Calu3 (cell line): ENCODE measurements at regions of chr15 and their contacts with region 1.

Region 1: DNA sequence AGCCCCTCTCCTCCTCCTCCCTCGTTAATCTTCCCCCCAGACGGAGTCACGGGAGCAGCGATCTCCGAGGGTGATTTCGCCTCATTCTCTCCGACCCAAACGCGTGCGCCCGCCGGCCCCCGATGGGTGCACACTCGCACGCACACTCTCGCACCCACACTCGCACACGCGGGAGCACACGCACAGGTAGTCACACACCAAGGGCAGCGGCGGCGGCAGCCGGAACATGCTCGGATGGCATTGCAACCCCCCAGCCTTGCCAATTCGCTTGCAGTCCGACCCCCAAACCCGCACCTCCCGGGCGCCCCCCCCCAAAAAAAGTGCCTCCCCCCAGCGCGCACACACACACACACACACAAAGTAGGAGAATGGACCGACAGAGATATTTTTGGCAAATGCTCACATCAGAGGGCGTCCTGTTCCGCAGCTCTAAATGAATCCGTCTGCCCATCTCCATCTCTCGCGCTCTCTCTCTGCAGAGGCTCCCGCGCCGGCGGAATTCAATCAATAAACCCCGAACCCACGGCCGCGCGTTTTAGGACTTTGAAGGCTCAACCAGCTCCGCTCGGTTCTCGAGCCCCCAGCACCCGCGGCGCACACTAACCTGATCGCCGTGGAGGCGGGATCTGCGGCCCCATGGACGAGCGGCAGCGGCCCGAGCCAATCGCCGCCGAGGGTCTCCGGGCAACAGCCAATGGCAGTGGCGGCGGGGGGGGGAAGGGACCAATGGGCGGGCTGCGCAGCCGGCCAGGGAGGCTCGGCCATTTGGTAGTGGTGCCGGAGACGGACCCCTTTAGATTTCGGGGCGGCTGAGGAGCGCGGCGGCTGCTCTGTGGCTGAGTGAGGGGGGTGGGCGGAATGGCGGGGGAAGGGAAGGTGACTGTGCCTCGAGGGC is at the start of gene ANP32A:
- DNase-seq: peak; percentile 99
- H3K4me3 Mint-ChIP-seq: peak within 1 kb of the TSS; percentile 96
- H3K27ac Mint-ChIP-seq: peak within 1 kb of the TSS; percentile 88
- H3K4me1 Mint-ChIP-seq: peaks cover 22% of the 10 kb centered on the region
- H3K27me3 Mint-ChIP-seq: no peaks in the 10 kb centered on the region
- CTCF ChIP-seq: no peak
- total RNA-seq, gene ANP32A: 250 and 267 TPM in 2 replicates

Region 2: GRCh38 chr15:68418611-68419161 is 401.9 kb before region 1 on chr15:
- CTCF ChIA-PET with region 1: no interaction called
- intact Hi-C with region 1: no loop called
- DNase-seq: no peak
- H3K4me3 Mint-ChIP-seq: no peak overlapping the region
- H3K27ac Mint-ChIP-seq: no peak overlapping the region
- H3K4me1 Mint-ChIP-seq: peaks cover 16% of the 10 kb centered on the region
- H3K27me3 Mint-ChIP-seq: peaks cover 31% of the 10 kb centered on the region
- CTCF ChIP-seq: no peak

Region 3: GRCh38 chr15:68749793-68750192 is 70.7 kb before region 1 on chr15:
- CTCF ChIA-PET with region 1: no interaction called
- intact Hi-C with region 1: no loop called
- DNase-seq: no peak
- H3K4me3 Mint-ChIP-seq: no peak overlapping the region
- H3K27ac Mint-ChIP-seq: no peak overlapping the region
- H3K4me1 Mint-ChIP-seq: peaks cover 4% of the 10 kb centered on the region
- H3K27me3 Mint-ChIP-seq: peaks cover 29% of the 10 kb centered on the region
- CTCF ChIP-seq: no peak

Region 4: DNA sequence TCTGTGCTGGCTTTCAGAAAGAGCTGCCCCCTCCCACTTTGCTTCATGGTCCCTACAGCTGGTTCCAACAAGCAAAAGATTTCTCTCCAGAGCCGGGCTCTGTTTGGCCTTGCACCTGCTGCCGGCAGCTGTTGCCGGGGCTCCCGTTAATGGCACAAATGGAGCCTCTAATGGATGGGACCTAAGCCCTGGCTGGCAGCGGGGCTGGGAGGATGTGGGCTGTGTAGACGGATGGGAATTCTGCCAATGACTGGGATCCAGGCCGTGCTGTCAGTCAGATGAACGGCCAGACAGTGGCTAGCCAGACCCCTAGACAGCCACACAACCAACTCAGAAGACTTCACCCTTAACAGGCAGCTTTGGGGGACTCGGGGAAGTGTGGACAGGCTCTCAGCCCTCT is 720.1 kb after region 1 on chr15:
- CTCF ChIA-PET with region 1: interaction called, 13 read pairs
- intact Hi-C with region 1: no loop called
- DNase-seq: no peak
- H3K4me3 Mint-ChIP-seq: no peak overlapping the region
- H3K27ac Mint-ChIP-seq: no peak overlapping the region
- H3K4me1 Mint-ChIP-seq: no peaks in the 10 kb centered on the region
- H3K27me3 Mint-ChIP-seq: peaks cover 50% of the 10 kb centered on the region
- CTCF ChIP-seq: no peak